ENCODE measurements at regions of chr11 and their contacts with region 1.

Region 1: DNA sequence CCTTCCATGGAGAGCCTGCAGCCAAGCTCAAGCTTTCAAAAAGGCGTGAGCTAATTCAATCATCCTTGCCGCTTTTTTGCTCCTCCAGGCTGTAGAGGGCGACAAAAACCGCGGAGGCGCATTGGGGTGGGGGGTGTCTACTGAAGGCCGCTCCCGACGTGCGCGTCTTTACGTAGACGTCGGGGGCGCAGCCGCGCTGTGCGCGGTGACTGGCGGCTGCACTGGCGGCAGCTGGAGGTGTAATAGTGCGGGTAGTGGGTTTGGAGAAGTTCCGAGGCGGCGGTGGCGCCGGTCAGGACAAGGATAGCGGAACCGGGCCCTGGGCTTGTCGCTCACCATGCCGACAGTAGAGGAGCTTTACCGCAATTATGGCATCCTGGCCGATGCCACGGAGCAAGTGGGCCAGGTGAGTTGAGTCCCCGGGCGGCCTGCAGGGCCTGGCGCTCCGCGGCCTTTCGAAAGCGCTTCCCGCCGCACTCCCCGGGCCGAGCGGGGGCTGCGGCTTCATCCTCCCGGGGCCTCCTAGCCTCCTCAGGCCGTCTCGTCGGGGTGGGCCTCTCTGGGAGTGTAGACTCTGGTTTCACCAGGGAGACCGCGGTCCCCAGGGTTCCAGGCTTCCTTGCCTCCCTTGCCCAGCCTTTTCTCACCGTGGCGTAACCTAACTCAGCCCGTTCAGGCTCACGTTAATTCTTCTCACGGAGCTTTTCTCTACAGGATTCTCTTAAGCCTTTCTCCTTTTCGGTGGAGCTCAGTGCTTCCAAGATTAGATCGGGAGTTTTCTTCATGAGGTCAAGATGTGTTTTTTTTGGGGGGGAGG is at the start of gene API5:
- DNase-seq: peak; percentile 96
- H3K4me3 Mint-ChIP-seq: peak within 1 kb of the TSS; percentile 99
- H3K27ac Mint-ChIP-seq: peak within 1 kb of the TSS; percentile 82
- H3K4me1 Mint-ChIP-seq: peaks cover 46% of the 10 kb centered on the region
- H3K27me3 Mint-ChIP-seq: no peaks in the 10 kb centered on the region
- total RNA-seq, gene API5: 154 to 166 TPM

Region 2: GRCh38 chr11:43212279-43212678 is 99.7 kb before region 1 on chr11:
- CTCF ChIA-PET with region 1: no interaction called
- POLR2A ChIA-PET with region 1: no interaction called
- intact Hi-C with region 1: no loop called
- DNase-seq: no peak
- H3K4me3 Mint-ChIP-seq: no peak overlapping the region
- H3K27ac Mint-ChIP-seq: no peak overlapping the region
- H3K4me1 Mint-ChIP-seq: no peaks in the 10 kb centered on the region
- H3K27me3 Mint-ChIP-seq: no peaks in the 10 kb centered on the region

Region 3: GRCh38 chr11:43358801-43359421 is 46.9 kb after region 1 on chr11 and contains the start of gene TTC17:
- CTCF ChIA-PET with region 1: interaction called, 51 read pairs
- POLR2A ChIA-PET with region 1: interaction called, 30 read pairs
- intact Hi-C with region 1: loop called (anchors 1 kb)
- DNase-seq: peak; percentile 96
- H3K4me3 Mint-ChIP-seq: peak within 1 kb of the TSS; percentile 89
- H3K27ac Mint-ChIP-seq: peak within 1 kb of the TSS; percentile 95
- H3K4me1 Mint-ChIP-seq: peaks cover 44% of the 10 kb centered on the region
- H3K27me3 Mint-ChIP-seq: no peaks in the 10 kb centered on the region
- total RNA-seq, gene TTC17: 51.5 to 52.0 TPM

Region 4: DNA sequence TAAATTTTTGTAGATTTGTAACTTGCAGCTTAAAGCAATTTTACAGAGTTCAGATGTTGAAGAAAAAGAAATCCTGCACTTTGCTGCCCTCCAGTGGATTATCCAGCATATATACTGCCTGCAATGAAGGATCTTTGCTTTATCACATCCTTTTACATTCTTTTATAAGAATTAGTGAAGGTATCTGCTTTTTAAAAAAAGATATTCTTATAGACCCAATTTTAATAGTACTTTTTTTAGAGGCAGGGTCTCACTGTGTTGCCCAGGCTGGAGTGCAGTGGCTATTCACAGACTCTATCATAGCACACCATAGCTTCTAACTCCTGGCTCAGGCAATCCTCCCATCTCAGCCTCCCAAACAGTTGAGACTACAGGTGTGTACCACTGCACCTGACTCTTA is 107.5 kb after region 1 on chr11:
- CTCF ChIA-PET with region 1: interaction called, 9 read pairs
- POLR2A ChIA-PET with region 1: interaction called, 4 read pairs
- intact Hi-C with region 1: loop called (anchors 1 kb)
- DNase-seq: peak; percentile 13
- H3K4me3 Mint-ChIP-seq: no peak overlapping the region
- H3K27ac Mint-ChIP-seq: no peak overlapping the region
- H3K4me1 Mint-ChIP-seq: no peaks in the 10 kb centered on the region
- H3K27me3 Mint-ChIP-seq: no peaks in the 10 kb centered on the region

Region 5: DNA sequence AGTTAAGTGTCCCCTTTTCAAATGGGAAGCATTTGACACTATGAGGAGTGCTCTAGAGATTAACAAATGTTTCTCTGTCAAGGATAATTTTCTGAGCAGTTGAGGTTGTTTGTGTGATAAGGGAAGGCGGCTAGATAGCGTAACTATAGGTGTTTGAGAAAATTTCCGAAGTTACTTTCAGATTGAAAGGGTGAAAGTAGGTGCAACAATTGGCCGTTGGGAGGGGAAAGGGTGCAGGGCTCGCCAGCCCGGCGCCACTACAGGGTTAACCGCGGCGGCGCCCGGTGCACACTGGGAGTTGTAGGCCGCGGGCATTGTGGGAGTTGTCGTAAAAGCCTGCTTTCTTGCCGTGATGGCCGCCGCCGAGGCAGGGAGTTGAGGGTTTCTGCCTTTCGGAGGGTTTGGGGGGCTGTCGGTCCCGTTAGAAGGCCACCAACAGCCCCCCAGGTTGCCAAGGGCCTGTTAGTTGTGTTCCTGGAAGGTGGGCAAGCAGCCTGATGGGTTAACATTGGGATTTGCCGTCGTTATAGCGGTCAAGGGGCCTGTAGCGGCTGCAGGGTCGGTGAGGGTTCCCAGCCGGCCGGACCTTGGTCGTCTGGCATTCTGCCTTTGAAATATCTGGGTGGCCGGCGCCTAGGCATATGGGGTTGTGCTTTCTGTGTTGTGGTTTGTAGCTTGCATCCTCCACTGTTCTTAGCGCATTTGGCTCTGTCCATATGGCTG is 332.1 kb after region 1 on chr11:
- CTCF ChIA-PET with region 1: no interaction called
- POLR2A ChIA-PET with region 1: no interaction called
- intact Hi-C with region 1: loop called (anchors 5 kb)
- DNase-seq: peak; percentile 93
- H3K4me3 Mint-ChIP-seq: peak overlapping the region; percentile 97
- H3K27ac Mint-ChIP-seq: peak overlapping the region; percentile 75
- H3K4me1 Mint-ChIP-seq: peaks cover 24% of the 10 kb centered on the region
- H3K27me3 Mint-ChIP-seq: peaks cover 11% of the 10 kb centered on the region

Measured in activated CD4-positive, alpha-beta memory T cell treated with anti-CD3 and anti-CD28 coated beads for 36 hours (primary cell).